Esophagus muscularis mucosa (tissue), 4 donors: ENCODE measurements at regions of chr11 and their contacts with region 1.

Region 1: GRCh38 chr11:43944761-43945311 is 2.4 kb downstream of the C11orf96 start:
- DNase-seq: no peak
- H3K4me3 ChIP-seq: peak overlapping the region; percentile 63 to 78 (median 75)
- H3K27ac ChIP-seq: peak overlapping the region; percentile 86 to 93 (median 89)
- H3K4me1 ChIP-seq: peaks cover 23 to 35% (median 34%) of the 10 kb centered on the region in 4 donors
- H3K27me3 ChIP-seq: peaks cover 0 to 13% (median 0%) of the 10 kb centered on the region in 4 donors
- CTCF ChIP-seq: peak; percentile 79 to 89 (median 85)
- EP300 ChIP-seq: no peak
- POLR2A ChIP-seq: no peak

Region 2: GRCh38 chr11:43895601-43896000 is 49.2 kb before region 1 on chr11:
- intact Hi-C with region 1: loop called (anchors 1 kb)
- DNase-seq: no peak
- H3K4me3 ChIP-seq: no peak overlapping the region
- H3K27ac ChIP-seq: no peak overlapping the region
- H3K4me1 ChIP-seq: no peaks in the 10 kb centered on the region
- H3K27me3 ChIP-seq: no peaks in the 10 kb centered on the region
- CTCF ChIP-seq: no peak
- EP300 ChIP-seq: no peak
- POLR2A ChIP-seq: no peak

Region 3: DNA sequence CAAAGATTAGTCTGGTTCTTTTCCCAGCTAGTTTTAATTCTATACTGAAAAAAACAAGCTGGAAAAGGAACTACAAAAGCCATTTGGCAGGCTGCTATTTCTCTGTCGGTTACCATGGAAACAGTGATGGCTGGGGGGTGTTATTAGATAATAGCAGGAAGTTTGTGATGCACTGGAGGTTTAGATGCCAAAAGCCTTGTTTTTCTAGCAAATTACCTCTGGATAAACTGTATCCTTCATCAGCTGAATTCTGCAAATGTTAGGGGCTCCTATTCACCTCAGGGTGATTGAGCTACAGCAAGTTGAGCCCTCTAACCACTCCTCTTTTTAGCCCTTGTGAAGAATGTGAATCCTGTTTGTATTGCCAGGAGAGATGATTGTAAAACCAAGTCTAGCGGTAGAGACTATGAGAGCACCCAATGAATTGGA is 39.0 kb before region 1 on chr11:
- intact Hi-C with region 1: loop called (anchors 5 kb)
- DNase-seq: no peak
- H3K4me3 ChIP-seq: no peak overlapping the region
- H3K27ac ChIP-seq: peak overlapping the region in 2 of 4 donors; percentile 50 to 53
- H3K4me1 ChIP-seq: peaks cover 16 to 21% (median 16%) of the 10 kb centered on the region in 4 donors
- H3K27me3 ChIP-seq: no peaks in the 10 kb centered on the region
- CTCF ChIP-seq: no peak
- EP300 ChIP-seq: no peak
- POLR2A ChIP-seq: no peak

Region 4: DNA sequence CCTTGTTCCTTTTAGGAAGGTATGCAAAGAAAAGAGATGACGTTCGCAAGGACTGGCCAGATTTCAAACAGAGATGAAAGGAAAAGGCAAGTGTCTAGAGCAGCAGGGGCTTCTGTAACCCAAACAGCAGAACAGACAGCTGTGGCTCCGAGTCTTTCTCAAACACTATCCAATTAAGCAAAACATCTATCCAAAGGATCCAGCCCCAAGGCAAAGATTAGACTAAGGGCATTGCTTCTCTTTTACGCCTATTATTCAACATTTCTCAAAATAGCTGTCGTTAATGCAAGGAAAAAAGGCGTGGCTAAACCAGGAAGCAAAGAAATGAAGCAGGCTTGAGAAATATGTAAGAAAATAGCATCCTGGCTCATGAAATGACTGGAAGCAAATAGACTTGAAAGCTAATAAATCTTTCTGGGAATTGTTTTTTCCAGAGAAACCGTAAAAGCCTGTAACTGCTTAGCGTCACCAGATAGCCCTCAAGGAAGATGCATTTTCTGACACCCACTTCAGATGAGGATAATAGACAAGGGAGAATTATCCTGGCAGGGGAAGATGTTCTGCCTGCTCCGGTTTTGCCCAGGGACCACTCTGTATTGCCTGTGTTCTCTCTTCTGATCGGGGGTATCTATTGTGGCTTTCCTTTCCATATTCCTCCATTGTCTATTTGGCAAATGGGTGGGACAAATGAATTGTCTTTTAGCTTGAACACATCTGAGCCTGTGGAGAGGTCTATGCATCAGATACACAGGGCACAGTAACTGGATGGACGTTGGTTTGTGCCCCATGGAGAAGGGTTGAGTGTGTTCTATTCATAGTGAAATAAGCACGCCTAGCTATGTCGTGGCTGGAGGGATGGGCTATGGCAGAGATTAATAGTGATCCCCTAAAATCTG is 17.8 kb after region 1 on chr11:
- intact Hi-C with region 1: no loop called
- DNase-seq: no peak
- H3K4me3 ChIP-seq: no peak overlapping the region
- H3K27ac ChIP-seq: no peak overlapping the region
- H3K4me1 ChIP-seq: peaks cover 0 to 9% (median 6%) of the 10 kb centered on the region in 4 donors
- H3K27me3 ChIP-seq: no peaks in the 10 kb centered on the region
- CTCF ChIP-seq: no peak
- EP300 ChIP-seq: no peak
- POLR2A ChIP-seq: no peak